ENCODE measurements at regions of chr2 and their contacts with region 1.

Region 1: DNA sequence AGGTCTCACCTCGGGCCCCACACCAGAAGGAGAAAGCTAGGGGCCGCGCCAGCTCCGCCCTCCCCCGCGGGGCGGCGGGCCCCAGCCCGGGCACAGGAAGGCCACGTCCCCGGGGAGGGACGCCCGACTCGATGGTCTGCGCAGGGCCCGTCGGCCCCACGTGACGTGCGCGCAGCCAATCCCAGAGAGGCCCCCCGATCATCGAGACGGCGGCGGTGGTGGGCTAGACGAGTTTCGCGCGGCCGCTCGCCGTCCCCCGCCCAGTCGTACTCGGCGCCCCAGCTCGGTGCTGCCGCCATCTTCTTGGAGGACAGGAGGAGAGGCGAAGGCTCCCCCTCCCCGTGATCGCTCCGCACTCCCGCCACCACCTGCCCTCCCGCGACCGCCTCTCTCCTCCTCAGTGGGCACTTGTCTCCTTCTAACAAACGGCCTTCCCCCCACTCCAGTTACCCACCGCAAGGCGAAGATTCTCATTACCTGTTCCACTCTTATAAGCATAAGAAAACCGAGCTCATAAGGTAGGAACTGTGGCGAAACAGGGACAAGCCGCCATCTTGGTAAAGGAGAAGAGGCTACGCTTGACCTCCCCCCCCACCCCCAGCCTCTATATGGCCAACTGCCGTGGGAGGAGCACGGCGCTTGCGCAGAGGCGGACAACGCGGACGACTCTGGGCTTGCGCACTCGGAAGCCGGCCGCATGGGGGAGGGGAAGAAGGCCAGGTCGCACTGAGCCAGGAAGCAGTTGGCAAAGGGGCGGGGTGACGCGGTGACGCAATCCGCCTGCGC is at the start of gene HDLBP:
- DNase-seq: peak; percentile 100
- H3K4me3 Mint-ChIP-seq: peak within 1 kb of the TSS; percentile 94
- H3K27ac Mint-ChIP-seq: peak within 1 kb of the TSS; percentile 100
- H3K4me1 Mint-ChIP-seq: peaks cover 60% of the 10 kb centered on the region
- H3K27me3 Mint-ChIP-seq: no peaks in the 10 kb centered on the region
- total RNA-seq, gene HDLBP: 282 and 293 TPM in 2 replicates

Region 2: DNA sequence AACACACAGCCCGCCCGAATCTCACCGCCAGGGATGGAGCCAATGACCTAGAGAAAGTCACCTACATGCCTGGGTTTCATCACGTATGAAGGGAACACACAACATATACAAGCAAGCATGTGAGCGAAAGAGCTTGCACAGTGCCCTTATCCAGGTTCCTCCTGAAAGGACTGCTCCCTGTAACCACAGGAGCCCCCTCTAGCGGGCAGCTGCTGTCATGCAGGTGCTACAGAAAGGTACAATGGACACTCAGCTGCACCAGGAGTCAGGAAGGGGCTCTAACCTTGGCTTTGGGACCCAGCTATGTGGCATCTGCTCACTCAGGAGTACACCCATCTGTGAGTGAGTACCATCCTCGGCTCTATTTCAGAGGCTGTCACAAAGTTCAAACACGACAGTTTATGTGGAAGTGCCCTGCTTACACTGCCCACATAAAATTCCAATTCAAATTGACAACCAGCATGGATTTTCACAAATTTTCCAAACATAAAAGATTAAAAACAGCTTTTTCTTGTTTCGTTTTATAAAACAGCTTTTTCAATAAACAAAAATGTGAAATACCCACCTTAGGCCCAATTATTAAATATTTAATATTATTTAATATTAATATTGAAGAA is 1293.7 kb before region 1 on chr2:
- intact Hi-C with region 1: loop called (anchors 10 kb)
- DNase-seq: peak; percentile 48
- H3K4me3 Mint-ChIP-seq: no peak overlapping the region
- H3K27ac Mint-ChIP-seq: no peak overlapping the region
- H3K4me1 Mint-ChIP-seq: peaks cover 19% of the 10 kb centered on the region
- H3K27me3 Mint-ChIP-seq: no peaks in the 10 kb centered on the region

Region 3: GRCh38 chr2:241102239-241102803 is 213.0 kb before region 1 on chr2 and contains the start of gene MTERF4:
- intact Hi-C with region 1: loop called (anchors 2 kb)
- DNase-seq: peak; percentile 85
- H3K4me3 Mint-ChIP-seq: peak within 1 kb of the TSS; percentile 94
- H3K27ac Mint-ChIP-seq: peak within 1 kb of the TSS; percentile 97
- H3K4me1 Mint-ChIP-seq: peaks cover 23% of the 10 kb centered on the region
- H3K27me3 Mint-ChIP-seq: no peaks in the 10 kb centered on the region
- total RNA-seq, gene MTERF4: 34.4 and 35.4 TPM in 2 replicates

Region 4: DNA sequence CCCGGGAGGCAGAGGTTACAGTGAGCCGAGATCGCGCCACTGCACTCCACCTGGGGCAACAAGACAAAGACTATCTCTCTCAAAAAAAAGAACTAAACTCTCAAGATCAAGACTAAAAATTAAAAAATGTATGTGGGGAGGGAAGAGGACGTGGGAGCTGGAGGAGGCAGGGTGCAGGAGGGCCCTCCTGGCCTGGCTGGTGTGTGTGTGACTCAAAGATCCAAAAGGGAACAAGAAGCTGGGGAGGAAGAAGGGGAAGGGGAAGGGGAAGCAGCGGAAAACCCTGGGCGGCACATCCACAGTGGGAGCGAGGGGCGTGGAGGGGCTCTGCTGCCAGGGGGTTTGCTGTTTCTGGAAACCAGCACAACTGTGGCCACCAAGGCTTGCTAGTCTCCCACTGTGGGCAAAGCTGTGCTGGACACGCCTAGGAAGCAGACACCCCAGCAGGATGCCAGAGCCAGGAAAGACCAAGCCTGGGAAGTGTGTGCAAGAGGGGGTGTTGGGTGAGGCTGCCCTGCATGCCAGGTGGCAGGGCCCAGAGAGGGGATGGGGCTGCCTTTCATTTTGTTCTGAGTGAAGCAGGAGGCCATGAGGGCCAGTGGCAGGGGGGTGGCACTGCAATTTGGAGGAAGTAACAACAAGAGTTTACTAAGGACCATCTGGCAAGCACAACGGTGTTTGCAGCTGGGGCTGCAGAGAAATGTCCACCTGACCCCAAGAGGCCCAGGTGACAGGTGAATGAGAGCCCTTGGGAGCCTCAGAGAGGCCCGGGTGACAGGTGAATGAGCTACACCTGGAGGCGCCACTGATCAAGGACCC is 82.3 kb before region 1 on chr2:
- intact Hi-C with region 1: no loop called
- DNase-seq: no peak
- H3K4me3 Mint-ChIP-seq: no peak overlapping the region
- H3K27ac Mint-ChIP-seq: no peak overlapping the region
- H3K4me1 Mint-ChIP-seq: no peaks in the 10 kb centered on the region
- H3K27me3 Mint-ChIP-seq: no peaks in the 10 kb centered on the region

Region 5: DNA sequence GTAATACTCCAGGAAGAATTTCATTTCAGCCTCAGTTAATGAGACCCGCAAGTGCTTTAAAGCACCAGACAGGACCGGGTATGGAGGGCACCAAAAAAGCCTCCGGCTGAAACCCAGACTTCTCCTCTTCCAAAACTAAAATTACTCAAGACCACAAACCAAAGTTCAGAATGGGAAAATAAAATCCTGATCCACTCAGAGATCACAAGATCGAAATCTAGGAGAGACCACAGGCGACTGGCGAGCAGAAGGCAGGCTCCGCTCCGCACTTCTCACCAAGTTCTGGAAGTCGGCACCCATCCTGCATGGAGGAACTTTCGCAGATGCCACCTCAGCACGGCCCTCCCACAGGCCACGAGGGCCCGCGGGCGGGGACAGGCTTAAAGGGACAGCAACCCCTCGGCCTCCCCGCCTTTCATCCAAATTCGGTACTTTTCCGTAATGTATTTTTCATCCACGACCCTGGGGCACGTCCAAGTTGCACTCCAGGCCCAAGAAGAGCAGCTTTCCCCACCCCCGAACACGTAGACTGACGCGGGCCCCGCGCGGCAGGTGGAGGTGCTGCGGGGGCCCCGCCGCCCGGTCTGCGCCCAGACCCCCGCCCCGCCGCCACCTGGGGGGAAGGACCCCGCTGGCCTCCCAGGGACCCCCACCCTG is 43.5 kb before region 1 on chr2:
- intact Hi-C with region 1: loop called (anchors 1 kb)
- DNase-seq: peak; percentile 36
- H3K4me3 Mint-ChIP-seq: peak overlapping the region; percentile 88
- H3K27ac Mint-ChIP-seq: peak overlapping the region; percentile 88
- H3K4me1 Mint-ChIP-seq: peaks cover 39% of the 10 kb centered on the region
- H3K27me3 Mint-ChIP-seq: no peaks in the 10 kb centered on the region

Region 6: GRCh38 chr2:241421330-241421729 is 106.0 kb after region 1 on chr2:
- intact Hi-C with region 1: no loop called
- DNase-seq: no peak
- H3K4me3 Mint-ChIP-seq: no peak overlapping the region
- H3K27ac Mint-ChIP-seq: no peak overlapping the region
- H3K4me1 Mint-ChIP-seq: no peaks in the 10 kb centered on the region
- H3K27me3 Mint-ChIP-seq: no peaks in the 10 kb centered on the region

Region 7: DNA sequence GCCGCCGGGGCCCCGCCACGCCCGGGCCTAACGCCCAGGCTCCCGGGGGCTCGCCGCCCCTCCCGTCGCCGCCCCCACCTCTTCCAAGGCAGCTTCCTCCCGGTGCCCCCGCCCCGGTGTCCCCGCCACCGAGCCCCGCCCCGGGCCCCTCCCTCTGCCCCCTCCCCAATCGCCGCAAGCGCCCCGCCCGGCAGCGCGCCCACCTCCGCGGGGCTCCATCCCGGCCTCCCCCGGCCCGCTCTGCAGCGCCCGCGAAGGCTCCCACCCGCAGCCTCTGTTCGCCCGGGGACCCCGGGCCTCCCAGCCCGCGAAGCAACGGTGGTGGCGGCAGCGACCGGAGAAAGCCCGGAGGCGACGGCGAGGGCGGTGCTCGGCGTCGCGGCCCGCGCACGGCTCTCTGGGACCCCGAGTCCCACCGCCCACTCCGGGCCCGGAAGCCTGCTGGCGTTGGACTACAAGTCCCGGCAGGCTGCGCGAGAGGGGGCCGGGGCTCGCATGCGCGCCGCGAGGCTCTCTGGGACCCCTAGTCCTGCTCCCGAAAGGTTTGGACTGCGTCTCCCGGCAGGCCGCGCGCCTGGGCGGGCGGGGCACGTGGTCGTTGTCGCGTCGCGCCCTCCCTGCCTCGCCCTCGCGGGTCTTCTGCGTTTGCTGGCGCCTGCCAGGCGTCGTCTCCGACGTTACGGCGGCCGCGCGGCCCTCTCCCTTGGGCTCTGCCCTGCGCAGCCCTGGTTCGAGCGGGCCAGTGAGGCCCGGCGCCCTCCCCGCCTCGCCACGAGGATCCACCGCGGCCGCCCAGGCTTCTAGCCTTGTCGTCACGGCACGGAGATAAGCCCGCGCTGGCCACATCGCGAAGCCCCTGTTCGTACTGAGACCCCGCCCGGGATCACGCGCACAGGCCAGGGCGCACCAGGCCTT is 193.2 kb after region 1 on chr2 and contains the start of gene STK25:
- intact Hi-C with region 1: loop called (anchors 2 kb)
- DNase-seq: peak; percentile 97
- H3K4me3 Mint-ChIP-seq: peak within 1 kb of the TSS; percentile 82
- H3K27ac Mint-ChIP-seq: peak within 1 kb of the TSS; percentile 69
- H3K4me1 Mint-ChIP-seq: peaks cover 17% of the 10 kb centered on the region
- H3K27me3 Mint-ChIP-seq: peaks cover 4% of the 10 kb centered on the region
- total RNA-seq, gene STK25: 116 and 122 TPM in 2 replicates

Region 8: DNA sequence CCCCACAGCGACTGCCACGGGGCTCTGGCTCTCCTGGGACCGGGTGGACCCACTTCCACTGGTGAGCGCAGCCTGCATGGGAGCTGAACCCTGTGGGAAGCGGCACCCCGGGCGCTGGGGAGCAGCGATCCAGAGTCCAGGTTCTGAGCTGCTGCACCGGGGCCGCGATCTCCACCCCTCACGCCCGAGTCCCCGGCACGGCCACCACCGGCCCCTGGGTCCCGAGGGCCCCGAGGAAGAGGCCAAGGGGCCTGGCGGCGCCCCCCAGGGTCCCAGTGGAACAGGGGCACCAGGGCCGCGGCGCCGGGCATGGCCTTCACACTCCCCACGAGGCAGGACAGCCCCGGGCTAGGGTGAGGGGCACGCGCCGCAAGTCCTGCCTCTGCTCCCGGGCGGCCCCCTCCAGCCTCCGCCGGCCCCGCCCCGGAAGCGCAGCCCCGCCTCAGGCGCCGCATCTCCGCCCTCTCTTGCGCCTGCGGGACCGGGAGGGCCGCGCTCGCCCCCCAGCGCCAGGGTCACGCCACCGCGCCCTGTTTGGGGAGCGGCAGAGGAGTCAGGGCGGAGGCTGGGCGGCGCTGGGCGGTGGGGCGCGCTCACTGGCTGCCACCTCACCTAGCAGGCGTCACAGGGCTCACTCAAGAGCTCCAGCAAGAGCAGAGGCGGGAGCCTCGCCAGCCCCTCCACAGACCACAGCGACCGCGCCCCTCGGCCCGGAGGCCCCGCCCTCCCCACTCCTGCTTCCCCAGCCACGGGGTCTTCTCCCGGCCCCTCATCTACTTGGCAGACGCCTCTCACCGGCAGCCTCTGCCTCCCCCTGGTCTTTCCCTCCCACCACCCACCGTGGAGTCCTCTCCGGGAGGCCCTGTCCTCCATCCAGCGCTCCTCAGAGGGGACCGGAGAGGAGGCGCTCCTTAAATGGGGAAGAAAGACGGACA is 294.8 kb after region 1 on chr2:
- intact Hi-C with region 1: loop called (anchors 1 kb)
- DNase-seq: peak; percentile 89
- H3K4me3 Mint-ChIP-seq: peak overlapping the region; percentile 62
- H3K27ac Mint-ChIP-seq: peak overlapping the region; percentile 53
- H3K4me1 Mint-ChIP-seq: peaks cover 17% of the 10 kb centered on the region
- H3K27me3 Mint-ChIP-seq: no peaks in the 10 kb centered on the region